Head of caudate nucleus (tissue), 42 donors: ENCODE measurements at regions of chr3 and their contacts with region 1.

Region 1: DNA sequence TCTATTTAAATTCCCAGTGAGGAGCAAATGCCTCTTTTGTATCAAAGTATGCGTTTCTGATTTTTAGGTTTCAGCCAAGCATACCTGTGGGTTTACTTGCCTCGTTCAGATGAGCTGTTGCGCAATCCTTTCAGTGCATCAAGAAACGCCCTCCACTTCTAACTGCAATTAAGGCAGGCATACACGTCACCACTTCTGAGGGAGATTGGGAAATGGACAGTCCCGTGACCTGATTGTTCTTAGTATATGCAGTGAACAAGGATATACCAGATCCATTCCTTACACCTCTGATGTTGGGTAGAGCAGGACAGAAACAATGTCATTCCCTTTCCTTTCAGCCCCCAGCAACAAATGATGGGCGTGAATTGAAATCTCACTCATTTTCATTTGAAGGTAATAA is 219.0 kb downstream of the ITPR1 start:
- DNase-seq: peak in 18 of 42 donors; percentile 23 to 79 (median 48)

Region 2: GRCh38 chr3:4898454-4899313 is 186.5 kb after region 1 on chr3:
- intact Hi-C with region 1: no loop called
- DNase-seq: no peak

Region 3: GRCh38 chr3:5057857-5058324 is 345.7 kb after region 1 on chr3:
- intact Hi-C with region 1: loop called (anchors 10 kb)
- DNase-seq: peak; percentile 34 to 87 (median 71)